Left cardiac atrium (tissue), 4 donors: ENCODE measurements at regions of chr2 and their contacts with region 1.

Region 1: DNA sequence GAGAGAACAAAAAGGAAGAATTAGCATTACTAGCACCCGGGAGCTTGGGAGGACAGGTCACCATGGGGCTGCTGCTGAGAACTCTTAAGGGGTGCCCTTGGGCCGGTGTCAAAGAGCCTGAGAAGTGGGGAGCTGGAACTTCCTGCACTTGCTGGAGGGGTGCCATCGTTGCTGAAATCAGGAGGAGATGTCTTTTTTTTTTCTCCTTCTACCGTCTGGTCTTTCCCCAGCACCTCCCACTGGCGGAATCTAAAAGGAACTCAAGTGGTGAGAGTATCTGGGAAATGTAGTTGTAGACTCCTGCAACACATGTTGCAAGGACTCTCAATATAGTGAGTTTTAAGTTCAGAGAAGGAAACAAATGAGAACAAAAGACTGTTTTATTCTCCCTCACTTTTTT is 6.1 kb upstream of the AMMECR1L start:
- DNase-seq: no peak
- ATAC-seq: peak in 1 of 2 donors; percentile 22

Region 2: DNA sequence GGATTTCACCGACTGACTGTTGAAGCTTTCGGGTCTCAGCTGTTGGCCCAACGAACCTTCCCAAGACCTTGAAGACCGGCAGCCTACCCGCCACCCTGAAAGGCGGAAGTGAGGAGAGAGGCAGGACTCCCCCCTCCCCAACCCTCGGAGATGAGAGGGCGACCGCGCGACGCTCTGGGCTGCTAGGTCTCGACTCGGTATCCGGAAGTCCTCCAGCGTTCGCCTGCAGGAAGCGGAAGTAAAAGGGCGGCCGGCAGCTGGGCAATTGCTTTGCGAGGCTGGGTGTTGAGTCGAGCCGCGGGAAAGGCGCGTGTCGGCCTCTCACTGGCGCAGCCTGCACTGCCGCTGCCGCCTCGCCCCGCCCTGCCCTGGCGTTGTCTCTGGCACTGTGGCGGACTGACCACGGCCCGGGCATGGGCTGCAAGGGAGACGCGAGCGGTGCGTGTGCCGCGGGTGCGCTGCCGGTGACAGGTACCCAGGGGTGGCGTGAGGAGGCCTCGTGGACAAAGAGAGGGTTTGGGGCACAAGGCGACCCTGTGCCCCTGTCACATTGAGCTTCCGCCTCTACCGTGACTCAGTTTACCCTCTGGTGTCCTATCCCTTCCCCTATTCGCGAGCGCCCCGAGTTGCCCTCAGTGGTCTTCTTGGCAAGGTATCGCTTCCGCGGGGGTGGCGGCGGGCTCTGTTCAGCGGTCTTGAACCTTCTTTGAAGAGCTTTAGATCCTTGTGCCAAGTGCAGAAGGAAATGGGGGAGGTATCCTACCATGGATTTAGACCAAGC is 199.3 kb after region 1 on chr2 and contains the start of gene UGGT1:
- intact Hi-C with region 1: loop called in 1 of 2 experiments (anchors 10 kb)
- DNase-seq: peak; percentile 96
- ATAC-seq: peak; percentile 99 to 100
- total RNA-seq, gene UGGT1: 30.6 to 31.3 TPM